AG04449 (cell line): ENCODE measurements at regions of chrX and their contacts with region 1.

Region 1: GRCh38 chrX:17046478-17047097 is 100.1 kb downstream of the REPS2 start:
- DNase-seq: no peak
- H3K4me3 ChIP-seq: no peak overlapping the region
- CTCF ChIP-seq: peak; percentile 57

Region 2: DNA sequence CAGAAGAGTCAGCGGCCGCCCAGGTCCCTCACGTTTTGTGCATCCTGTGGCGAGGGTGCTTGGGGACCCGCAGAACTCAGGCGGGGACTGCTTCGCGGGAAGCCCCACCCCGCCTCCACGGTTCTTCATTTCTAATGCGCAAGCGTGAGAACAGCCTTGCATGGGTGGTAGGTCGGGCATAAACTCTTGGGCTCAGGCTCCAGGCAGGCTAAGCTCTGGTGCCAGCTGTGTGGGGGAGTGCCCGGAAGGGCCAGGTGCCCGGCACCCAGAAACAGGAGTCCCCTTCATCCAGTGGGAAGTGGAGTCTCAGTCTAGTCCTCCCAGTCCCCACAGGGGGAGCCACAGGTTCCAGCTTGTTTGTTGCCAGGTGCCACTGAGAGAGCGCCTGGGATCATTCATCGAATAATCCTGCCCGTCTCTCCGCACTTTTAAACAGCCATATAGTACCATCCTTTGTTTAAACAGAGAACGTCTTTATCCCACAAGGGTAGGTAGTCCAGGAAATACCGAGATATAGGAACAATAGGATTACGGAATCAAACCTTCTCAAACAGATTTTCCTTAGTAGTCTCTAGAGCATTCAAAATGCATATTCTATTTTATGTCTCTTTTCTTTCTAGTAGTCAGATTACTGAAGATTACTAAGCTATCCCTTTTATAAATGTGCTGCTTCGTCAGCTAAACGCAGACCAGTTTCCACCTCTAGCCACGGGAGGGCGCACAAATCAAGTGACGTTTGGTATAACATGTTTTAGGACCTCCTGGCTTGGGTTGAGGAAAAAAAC is 163.7 kb before region 1 on chrX:
- CTCF ChIA-PET with region 1: interaction called, 82 read pairs
- POLR2A ChIA-PET with region 1: no interaction called
- DNase-seq: no peak
- H3K4me3 ChIP-seq: peak overlapping the region; percentile 46
- CTCF ChIP-seq: peak; percentile 64

Region 3: GRCh38 chrX:17007206-17007683 is 39.3 kb before region 1 on chrX:
- CTCF ChIA-PET with region 1: interaction called, 38 read pairs
- POLR2A ChIA-PET with region 1: no interaction called
- DNase-seq: no peak
- H3K4me3 ChIP-seq: no peak overlapping the region
- CTCF ChIP-seq: peak; percentile 37

Region 4: DNA sequence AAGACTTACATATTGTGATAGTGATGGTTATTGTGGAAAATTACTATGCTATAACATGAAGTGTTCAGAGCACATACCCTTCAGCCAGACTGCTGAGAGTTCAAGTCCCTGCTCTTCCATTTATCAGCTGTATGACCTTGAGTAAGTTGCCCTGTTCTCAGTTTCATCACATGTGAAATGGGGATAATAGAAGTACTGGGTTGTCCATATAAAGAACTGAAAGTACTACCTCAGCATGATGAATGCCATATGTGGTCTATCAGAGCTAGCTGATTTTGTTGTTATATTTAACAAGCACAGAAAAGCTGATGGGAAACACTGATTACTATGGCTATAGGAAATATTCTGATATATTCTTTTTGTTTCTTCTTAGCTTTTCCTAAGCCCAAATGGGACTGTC is 15.5 kb after region 1 on chrX:
- CTCF ChIA-PET with region 1: interaction called, 12 read pairs
- POLR2A ChIA-PET with region 1: no interaction called
- DNase-seq: no peak
- H3K4me3 ChIP-seq: no peak overlapping the region
- CTCF ChIP-seq: no peak